Activated CD4-positive, alpha-beta T cell treated with anti-CD3 and anti-CD28 coated beads for 36 hours (primary cell): ENCODE measurements at regions of chr11 and their contacts with region 1.

Region 1: GRCh38 chr11:61516675-61517572 is 8.4 kb downstream of the LRRC10B start:
- DNase-seq: peak; percentile 72
- ATAC-seq: peak; percentile 69
- H3K4me3 Mint-ChIP-seq: peak overlapping the region; percentile 2
- H3K27ac Mint-ChIP-seq: no peak overlapping the region
- H3K4me1 Mint-ChIP-seq: peaks cover 6% of the 10 kb centered on the region
- H3K27me3 Mint-ChIP-seq: peaks cover 15% of the 10 kb centered on the region

Region 2: GRCh38 chr11:61342207-61342803 is 174.6 kb before region 1 on chr11:
- CTCF ChIA-PET with region 1: no interaction called
- POLR2A ChIA-PET with region 1: no interaction called
- intact Hi-C with region 1: no loop called
- DNase-seq: no peak
- ATAC-seq: no peak
- H3K4me3 Mint-ChIP-seq: no peak overlapping the region
- H3K27ac Mint-ChIP-seq: no peak overlapping the region
- H3K4me1 Mint-ChIP-seq: no peaks in the 10 kb centered on the region
- H3K27me3 Mint-ChIP-seq: no peaks in the 10 kb centered on the region

Region 3: GRCh38 chr11:61477727-61478148 is 39.2 kb before region 1 on chr11:
- CTCF ChIA-PET with region 1: interaction called, 108 read pairs
- POLR2A ChIA-PET with region 1: no interaction called
- intact Hi-C with region 1: loop called (anchors 1 kb)
- DNase-seq: peak; percentile 70
- ATAC-seq: peak; percentile 56
- H3K4me3 Mint-ChIP-seq: no peak overlapping the region
- H3K27ac Mint-ChIP-seq: no peak overlapping the region
- H3K4me1 Mint-ChIP-seq: peaks cover 9% of the 10 kb centered on the region
- H3K27me3 Mint-ChIP-seq: no peaks in the 10 kb centered on the region

Region 4: DNA sequence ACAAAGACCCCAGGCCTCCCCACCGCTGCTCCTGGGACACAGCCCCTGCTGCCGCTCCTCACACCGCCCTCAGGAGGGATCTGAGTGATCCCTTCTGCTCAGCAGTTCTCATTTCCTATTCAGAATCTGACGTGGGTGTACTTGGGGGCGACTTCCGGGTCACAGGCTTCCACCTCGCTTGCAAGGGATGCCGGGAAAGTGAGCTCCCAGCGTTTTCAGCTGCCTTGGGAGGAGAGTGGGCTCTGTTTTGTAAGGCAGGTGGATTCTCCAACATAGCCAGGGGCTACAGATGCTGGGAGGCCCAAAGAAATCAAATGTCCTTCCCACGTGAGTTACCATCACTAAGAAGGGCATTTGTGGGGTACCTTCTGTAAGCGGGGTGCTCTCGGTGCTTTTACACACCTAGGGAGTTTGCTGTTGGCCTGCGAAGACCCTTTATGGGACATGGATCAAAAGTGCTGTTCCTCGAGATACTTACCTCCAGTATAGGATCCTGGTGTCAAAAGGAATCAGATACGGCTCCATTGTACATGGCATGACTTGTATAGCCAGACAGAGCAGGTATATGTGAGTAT is 18.1 kb before region 1 on chr11:
- CTCF ChIA-PET with region 1: interaction called, 29 read pairs
- POLR2A ChIA-PET with region 1: no interaction called
- intact Hi-C with region 1: no loop called
- DNase-seq: no peak
- ATAC-seq: no peak
- H3K4me3 Mint-ChIP-seq: no peak overlapping the region
- H3K27ac Mint-ChIP-seq: no peak overlapping the region
- H3K4me1 Mint-ChIP-seq: no peaks in the 10 kb centered on the region
- H3K27me3 Mint-ChIP-seq: no peaks in the 10 kb centered on the region

Region 5: DNA sequence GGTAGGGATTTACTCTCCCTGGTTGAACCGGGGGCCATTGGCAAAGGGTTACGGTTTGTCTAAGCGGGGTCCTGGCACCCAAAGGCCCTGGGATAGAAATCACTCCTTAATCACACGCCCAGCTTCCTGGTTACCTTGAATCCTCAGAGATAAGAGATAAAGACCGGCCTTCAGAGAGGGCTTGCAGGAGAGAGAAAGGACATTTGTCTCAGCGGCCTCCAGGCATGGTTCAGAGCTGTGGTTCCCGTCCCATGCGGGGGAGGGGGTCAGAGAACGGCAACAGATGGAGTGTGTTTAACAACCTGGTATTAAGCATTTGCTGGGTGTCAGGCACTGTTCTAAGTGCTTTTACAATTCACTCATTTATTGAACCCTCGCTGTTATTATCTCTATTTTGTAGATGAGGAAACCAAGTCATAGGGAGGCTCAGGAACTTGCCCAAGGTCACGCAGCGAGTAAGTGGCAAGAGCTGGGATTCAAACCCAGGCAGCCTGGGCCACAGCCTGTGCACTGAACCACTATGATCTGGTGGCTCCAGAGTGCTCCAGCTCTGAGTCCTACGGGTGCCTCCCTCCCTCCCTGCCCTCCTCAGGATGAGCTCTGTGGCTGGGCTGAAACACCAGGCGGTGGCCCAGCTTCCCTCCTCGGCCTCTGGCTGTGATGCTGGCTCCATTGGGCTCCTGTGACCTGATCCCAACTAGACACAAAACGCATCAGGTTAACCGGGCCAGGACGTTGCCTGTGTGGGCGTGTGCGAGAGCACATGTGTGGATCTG is 10.2 kb after region 1 on chr11:
- CTCF ChIA-PET with region 1: interaction called, 13 read pairs
- POLR2A ChIA-PET with region 1: no interaction called
- intact Hi-C with region 1: no loop called
- DNase-seq: no peak
- ATAC-seq: no peak
- H3K4me3 Mint-ChIP-seq: no peak overlapping the region
- H3K27ac Mint-ChIP-seq: no peak overlapping the region
- H3K4me1 Mint-ChIP-seq: no peaks in the 10 kb centered on the region
- H3K27me3 Mint-ChIP-seq: peaks cover 7% of the 10 kb centered on the region

Region 6: GRCh38 chr11:61718621-61719302 is 201.8 kb after region 1 on chr11:
- CTCF ChIA-PET with region 1: no interaction called
- POLR2A ChIA-PET with region 1: no interaction called
- intact Hi-C with region 1: no loop called
- DNase-seq: no peak
- ATAC-seq: no peak
- H3K4me3 Mint-ChIP-seq: no peak overlapping the region
- H3K27ac Mint-ChIP-seq: no peak overlapping the region
- H3K4me1 Mint-ChIP-seq: no peaks in the 10 kb centered on the region
- H3K27me3 Mint-ChIP-seq: no peaks in the 10 kb centered on the region